ENCODE measurements at regions of chr10 and their contacts with region 1.

Region 1: DNA sequence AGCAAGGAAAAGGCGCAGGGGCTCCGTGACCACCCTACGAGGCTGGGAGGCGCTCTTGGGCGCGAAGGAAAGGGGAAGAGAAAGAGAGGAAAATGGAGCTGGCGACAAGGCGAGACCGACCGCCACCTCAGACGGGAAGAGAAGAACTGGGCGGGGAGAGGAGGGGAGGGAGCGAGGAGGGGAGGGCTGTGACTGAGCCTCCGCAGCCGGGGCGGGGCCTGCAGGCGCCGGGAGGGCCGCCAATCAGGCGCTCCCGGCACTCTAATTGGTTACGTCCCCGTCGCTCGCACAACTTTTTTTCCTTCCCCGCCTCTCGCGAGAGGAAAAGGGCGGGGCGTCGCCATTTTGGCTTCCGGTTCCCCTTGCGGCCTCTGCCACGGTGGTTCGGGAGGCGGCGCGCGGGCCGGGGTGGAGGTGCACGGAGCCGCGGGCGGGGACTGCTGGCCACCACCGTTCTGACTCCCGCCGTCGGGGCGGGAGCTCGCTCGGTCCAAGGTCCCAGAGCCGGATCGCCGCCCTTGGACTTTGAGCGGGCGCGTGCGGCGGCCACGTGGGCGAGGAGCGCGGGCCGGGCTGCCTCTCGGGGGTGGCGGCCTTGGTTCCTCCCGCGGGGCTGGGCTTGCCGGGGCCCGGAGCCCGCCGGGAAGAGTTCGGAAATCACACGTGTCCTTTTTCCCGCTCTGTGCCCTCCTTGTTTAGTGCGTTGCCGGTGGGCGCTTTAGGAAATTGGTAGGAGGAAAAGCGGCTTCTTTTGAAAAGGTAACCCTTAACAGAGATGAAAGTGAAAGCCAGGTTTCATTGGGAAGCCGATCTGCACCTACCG is at the start of gene GDI2:
- DNase-seq: peak; percentile 96
- H3K4me3 ChIP-seq: peak within 1 kb of the TSS; percentile 89 to 96 (median 96)
- H3K4me3 Mint-ChIP-seq: peak within 1 kb of the TSS; percentile 81 to 93
- H3K27ac ChIP-seq: peak within 1 kb of the TSS; percentile 88 to 97
- H3K27ac Mint-ChIP-seq: peak within 1 kb of the TSS; percentile 86 to 96 (median 96)
- H3K4me1 ChIP-seq: peaks cover 47 to 62% of the 10 kb centered on the region in 2 donors
- H3K4me1 Mint-ChIP-seq: peaks cover 59% of the 10 kb centered on the region
- H3K27me3 ChIP-seq: no peaks in the 10 kb centered on the region
- H3K27me3 Mint-ChIP-seq: peaks cover 0 to 2% (median 0%) of the 10 kb centered on the region in 3 donors
- CTCF ChIP-seq: no peak
- polyA plus RNA-seq, gene GDI2: 100 to 320 (median 316) TPM

Region 2: DNA sequence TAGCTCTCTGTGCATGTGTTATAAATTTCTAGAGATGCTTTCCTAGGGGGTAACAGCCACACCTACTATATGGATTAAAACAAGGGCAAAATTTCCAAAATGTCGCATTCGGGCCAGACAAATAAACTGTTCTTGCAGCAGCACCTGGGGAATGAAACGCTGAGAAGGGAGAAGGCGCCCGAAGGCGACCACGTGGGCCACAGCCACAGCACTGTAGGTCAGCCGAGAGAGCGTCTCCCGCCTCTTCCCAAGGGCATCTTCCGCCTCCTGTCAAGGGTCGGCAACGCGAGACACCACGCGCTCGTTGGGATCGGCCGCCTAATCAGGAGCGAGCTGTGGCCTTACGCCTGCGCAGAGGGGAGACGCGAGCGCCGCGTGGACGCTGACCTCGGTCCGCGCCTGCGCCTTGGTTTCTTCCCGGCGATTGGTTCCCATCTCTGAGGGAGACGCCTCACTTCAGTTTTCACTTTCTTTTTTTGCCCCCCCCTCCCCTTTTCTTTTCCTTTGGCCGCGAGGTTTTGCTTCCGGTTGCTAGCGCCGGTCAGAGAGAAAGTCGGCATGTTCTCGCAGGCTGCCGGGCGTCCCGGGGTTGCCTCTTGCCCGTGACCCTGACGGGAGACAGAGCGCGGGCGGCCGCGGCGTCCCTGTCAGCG is 129.1 kb before region 1 on chr10 and contains the start of gene TASOR2:
- intact Hi-C with region 1: loop called (anchors 5 to 10 kb)
- DNase-seq: peak; percentile 96 to 98 (median 96)
- H3K4me3 ChIP-seq: peak within 1 kb of the TSS; percentile 76 to 92 (median 81)
- H3K4me3 Mint-ChIP-seq: peak within 1 kb of the TSS; percentile 97 to 98
- H3K27ac ChIP-seq: peak within 1 kb of the TSS; percentile 80 to 93
- H3K27ac Mint-ChIP-seq: peak within 1 kb of the TSS; percentile 90 to 97 (median 95)
- H3K4me1 ChIP-seq: peaks cover 17 to 21% of the 10 kb centered on the region in 2 donors
- H3K4me1 Mint-ChIP-seq: peaks cover 31% of the 10 kb centered on the region
- H3K27me3 ChIP-seq: no peaks in the 10 kb centered on the region
- H3K27me3 Mint-ChIP-seq: peaks cover 0 to 3% (median 2%) of the 10 kb centered on the region in 3 donors
- CTCF ChIP-seq: no peak
- polyA plus RNA-seq, gene TASOR2: 3.2 to 12.3 (median 9.5) TPM

Region 3: DNA sequence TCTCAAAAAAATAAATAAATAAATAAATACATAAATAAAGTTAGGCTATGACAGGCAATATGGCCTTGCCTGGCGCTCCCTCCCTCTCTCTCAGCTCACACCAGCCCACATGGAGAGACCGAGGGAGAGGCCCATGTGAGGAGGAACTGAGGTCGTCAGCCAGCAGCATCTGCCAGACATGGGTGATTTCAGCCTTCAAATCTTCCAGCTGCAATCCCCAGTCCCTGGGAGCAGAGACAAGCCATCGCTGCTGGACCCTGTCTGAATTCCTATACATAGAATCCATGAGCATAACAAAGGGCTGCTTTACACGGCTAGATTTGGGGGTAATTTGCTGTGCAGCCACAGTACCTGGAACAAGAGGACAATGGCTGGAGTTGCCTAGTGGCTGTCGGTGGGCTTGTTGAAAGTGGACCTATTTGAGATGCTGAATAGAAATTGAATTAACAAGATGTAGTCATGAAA is 40.6 kb after region 1 on chr10:
- intact Hi-C with region 1: loop called in 1 of 2 experiments (anchors 5 kb)
- DNase-seq: no peak
- H3K4me3 ChIP-seq: no peak overlapping the region
- H3K4me3 Mint-ChIP-seq: no peak overlapping the region
- H3K27ac ChIP-seq: no peak overlapping the region
- H3K27ac Mint-ChIP-seq: no peak overlapping the region
- H3K4me1 ChIP-seq: peaks cover 22 to 25% of the 10 kb centered on the region in 2 donors
- H3K4me1 Mint-ChIP-seq: peaks cover 19% of the 10 kb centered on the region
- H3K27me3 ChIP-seq: no peaks in the 10 kb centered on the region
- H3K27me3 Mint-ChIP-seq: peaks cover 0 to 6% (median 6%) of the 10 kb centered on the region in 3 donors
- CTCF ChIP-seq: no peak

Region 4: DNA sequence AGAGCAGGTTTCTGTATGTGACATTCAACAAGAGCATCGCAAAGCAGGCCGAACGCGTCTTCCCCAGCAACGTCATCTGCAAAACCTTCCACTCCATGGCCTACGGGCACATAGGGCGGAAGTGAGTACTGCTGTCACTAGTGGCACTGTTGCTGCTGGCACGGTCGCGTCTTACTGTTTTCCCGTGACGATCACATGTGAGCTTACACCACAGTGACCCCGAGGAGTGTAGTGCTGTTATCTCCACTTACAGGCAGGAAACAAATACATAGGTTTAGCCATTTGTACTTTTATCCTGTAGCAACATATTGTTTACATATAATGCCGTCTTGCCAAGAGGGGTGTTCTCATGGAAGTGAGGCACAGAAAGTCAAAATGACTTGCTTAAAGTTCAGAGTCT is 102.0 kb after region 1 on chr10:
- intact Hi-C with region 1: no loop called
- DNase-seq: no peak
- H3K4me3 ChIP-seq: no peak overlapping the region
- H3K4me3 Mint-ChIP-seq: no peak overlapping the region
- H3K27ac ChIP-seq: peak overlapping the region in 1 of 2 donors; percentile 4
- H3K27ac Mint-ChIP-seq: peak overlapping the region in 1 of 7 donors; percentile 68
- H3K4me1 ChIP-seq: no peaks in the 10 kb centered on the region
- H3K4me1 Mint-ChIP-seq: no peaks in the 10 kb centered on the region
- H3K27me3 ChIP-seq: no peaks in the 10 kb centered on the region
- H3K27me3 Mint-ChIP-seq: no peaks in the 10 kb centered on the region
- CTCF ChIP-seq: no peak